ENCODE measurements at regions of chr6 and their contacts with region 1.

Region 1: DNA sequence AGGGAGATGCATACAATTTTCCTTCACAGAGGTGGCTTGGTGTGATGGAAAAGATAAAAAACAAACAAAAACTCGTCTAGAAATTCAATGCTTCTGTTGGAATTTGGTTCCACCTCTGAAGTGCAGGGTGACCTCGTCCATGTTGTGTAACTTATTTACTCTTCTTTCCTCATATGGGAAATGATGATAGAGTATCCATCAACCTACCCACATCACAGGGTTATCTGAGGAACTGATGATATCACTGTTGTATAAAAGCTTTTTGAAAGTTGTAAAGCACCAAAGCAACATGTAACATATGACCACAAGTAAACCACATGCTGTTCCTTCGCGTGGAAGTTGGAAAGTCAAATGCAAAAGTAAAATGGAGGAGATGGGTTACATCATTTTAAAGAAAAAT is 212.0 kb upstream of the SGK1 start:
- DNase-seq: peak; percentile 77
- H3K4me3 Mint-ChIP-seq: no peak overlapping the region
- H3K27ac Mint-ChIP-seq: no peak overlapping the region
- H3K4me1 Mint-ChIP-seq: peaks cover 44% of the 10 kb centered on the region
- H3K27me3 Mint-ChIP-seq: no peaks in the 10 kb centered on the region

Region 2: DNA sequence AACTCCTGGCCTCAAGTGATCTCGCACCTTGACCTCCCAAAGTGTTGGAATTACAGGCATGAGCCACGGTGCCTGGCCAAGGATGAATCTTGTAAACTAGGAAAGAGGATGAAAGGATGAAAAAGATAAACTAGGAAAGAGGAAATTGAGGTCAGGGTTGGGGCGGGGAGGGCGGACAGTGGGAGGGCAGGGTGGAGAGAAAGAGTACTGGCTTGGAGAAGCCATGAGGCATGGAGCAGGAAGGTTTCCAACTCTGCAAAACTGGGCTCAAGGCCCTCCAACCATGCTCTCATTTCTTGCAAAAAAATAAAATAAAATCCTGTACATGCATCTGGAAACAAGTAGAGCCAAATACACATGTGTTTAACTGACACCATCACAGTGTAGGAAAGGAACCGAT is 44.6 kb after region 1 on chr6:
- intact Hi-C with region 1: loop called (anchors 5 kb)
- DNase-seq: no peak
- H3K4me3 Mint-ChIP-seq: no peak overlapping the region
- H3K27ac Mint-ChIP-seq: no peak overlapping the region
- H3K4me1 Mint-ChIP-seq: peaks cover 11% of the 10 kb centered on the region
- H3K27me3 Mint-ChIP-seq: peaks cover 12% of the 10 kb centered on the region